ENCODE measurements at regions of chr7 and their contacts with region 1.

Region 1: DNA sequence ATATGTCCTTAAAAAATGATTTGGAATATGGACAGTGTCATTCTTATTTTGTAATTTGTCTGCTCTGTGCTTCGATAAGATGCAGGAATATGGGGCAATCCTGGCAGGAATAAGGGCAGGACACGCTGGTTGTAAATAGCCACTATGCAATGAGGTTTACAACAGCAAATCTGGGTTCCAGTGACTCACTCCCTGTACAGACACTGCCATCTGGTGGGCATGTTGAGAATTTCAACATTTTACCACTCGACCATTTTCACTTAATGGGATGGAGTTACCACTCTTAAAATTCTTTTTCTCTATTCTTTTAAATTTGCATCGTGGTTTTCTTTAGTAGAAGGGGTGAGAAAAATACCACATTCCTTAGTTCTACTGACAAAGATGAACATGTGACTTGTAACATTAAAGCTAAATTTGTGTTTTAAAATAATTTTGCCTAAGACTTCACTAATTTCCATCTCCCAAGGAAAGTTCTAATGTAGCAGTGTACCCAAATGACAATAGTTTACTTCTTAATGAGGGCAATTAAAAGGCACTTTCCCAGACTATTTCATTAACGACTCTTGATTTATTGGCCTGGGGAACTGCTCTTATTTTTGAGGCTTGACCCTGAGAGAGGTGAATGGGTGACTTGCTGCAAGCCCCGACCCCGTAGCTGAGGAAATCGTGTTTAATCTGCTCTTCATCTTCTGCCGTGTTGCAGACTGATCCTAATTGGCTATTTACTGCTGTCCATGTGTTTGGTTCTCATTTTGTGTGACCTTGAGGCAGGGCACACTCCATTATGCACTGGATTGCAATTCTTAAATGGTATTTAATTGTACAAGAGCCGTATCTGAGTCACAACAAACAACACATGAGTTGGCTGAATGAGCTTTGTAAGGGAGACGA is 173.6 kb upstream of the IMMP2L start:
- DNase-seq: peak in 2 of 5 donors; percentile 40 to 46
- ATAC-seq: peak; percentile 34 to 77 (median 56)
- H3K4me3 ChIP-seq: no peak overlapping the region
- H3K27ac ChIP-seq: no peak overlapping the region
- H3K4me1 ChIP-seq: peaks cover 0 to 18% (median 7%) of the 10 kb centered on the region in 12 donors
- H3K27me3 ChIP-seq: no peaks in the 10 kb centered on the region
- CTCF ChIP-seq: peak; percentile 81 to 94 (median 88)
- POLR2A ChIP-seq: no peak

Region 2: DNA sequence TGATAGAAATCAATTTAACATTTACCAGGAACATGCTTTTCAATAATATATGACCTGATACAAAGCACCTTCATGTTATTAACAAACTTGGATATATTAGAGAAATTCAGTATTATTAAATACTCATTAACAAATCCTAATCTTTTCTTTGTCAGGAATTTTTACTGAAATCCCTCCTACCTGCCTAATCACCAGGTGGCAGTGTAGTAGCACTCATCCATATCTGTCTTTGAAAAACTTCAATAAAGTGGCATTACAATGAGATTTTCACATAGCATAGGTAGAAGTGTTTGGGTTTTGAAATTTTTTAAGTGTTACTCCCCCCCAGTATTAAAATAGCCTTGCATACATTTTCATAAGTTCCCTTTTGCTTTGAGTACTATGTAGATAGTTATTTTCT is 1891.5 kb before region 1 on chr7:
- intact Hi-C with region 1: loop called in 1 of 10 experiments (anchors 10 kb)
- DNase-seq: no peak
- ATAC-seq: no peak
- H3K4me3 ChIP-seq: no peak overlapping the region
- H3K27ac ChIP-seq: no peak overlapping the region
- H3K4me1 ChIP-seq: no peaks in the 10 kb centered on the region
- H3K27me3 ChIP-seq: no peaks in the 10 kb centered on the region
- CTCF ChIP-seq: peak in 9 of 12 donors; percentile 14 to 45 (median 25)
- POLR2A ChIP-seq: no peak

Region 3: GRCh38 chr7:111089822-111090426 is 646.0 kb before region 1 on chr7:
- intact Hi-C with region 1: loop called in 8 of 10 experiments (anchors 5 to 10 kb)
- DNase-seq: no peak
- ATAC-seq: peak in 3 of 4 donors; percentile 37 to 81 (median 57)
- H3K4me3 ChIP-seq: no peak overlapping the region
- H3K27ac ChIP-seq: no peak overlapping the region
- H3K4me1 ChIP-seq: peaks cover 0 to 27% (median 8%) of the 10 kb centered on the region in 12 donors
- H3K27me3 ChIP-seq: no peaks in the 10 kb centered on the region
- CTCF ChIP-seq: peak; percentile 66 to 86 (median 76)
- POLR2A ChIP-seq: no peak

Region 4: GRCh38 chr7:111329367-111330234 is 406.3 kb before region 1 on chr7:
- intact Hi-C with region 1: loop called in 1 of 10 experiments (anchors 10 kb)
- DNase-seq: no peak
- ATAC-seq: no peak
- H3K4me3 ChIP-seq: no peak overlapping the region
- H3K27ac ChIP-seq: no peak overlapping the region
- H3K4me1 ChIP-seq: no peaks in the 10 kb centered on the region
- H3K27me3 ChIP-seq: no peaks in the 10 kb centered on the region
- CTCF ChIP-seq: peak in 1 of 12 donors; percentile 13
- POLR2A ChIP-seq: no peak

Region 5: GRCh38 chr7:111499037-111499655 is 236.8 kb before region 1 on chr7:
- intact Hi-C with region 1: loop called in 1 of 10 experiments (anchors 10 kb)
- DNase-seq: no peak
- ATAC-seq: no peak
- H3K4me3 ChIP-seq: no peak overlapping the region
- H3K27ac ChIP-seq: no peak overlapping the region
- H3K4me1 ChIP-seq: peaks cover 0 to 4% (median 0%) of the 10 kb centered on the region in 12 donors
- H3K27me3 ChIP-seq: no peaks in the 10 kb centered on the region
- CTCF ChIP-seq: no peak
- POLR2A ChIP-seq: no peak

Measured in heart left ventricle (tissue), 16 donors.